ENCODE measurements at regions of chr12 and their contacts with region 1.

Region 1: DNA sequence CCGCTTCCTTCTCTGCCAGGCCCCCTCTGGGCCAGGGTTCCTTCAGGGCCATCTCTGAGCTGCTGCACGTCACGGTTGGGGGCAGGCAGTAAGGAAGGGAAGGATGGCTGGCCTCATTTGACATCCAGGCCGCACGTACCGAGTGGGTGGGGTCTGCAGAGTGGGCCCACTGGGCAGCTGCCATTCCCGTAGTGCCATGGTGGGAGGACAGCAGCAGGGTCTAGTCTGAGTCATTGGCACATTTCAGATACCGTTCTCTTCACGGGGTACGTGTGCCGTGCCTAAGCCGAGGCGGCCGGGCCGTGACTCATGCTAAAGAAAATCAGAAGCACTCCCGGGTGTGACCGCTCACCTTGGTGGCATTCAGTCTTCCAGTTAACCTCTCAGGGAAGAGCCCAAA is 43.9 kb downstream of the IL31 start:
- DNase-seq: no peak
- ATAC-seq: no peak
- H3K4me3 ChIP-seq: no peak overlapping the region
- H3K27ac ChIP-seq: peak overlapping the region in 1 of 2 experiments; percentile 50; a peak in 2 of 6 replicates
- H3K4me1 ChIP-seq: peaks cover 31% of the 10 kb centered on the region
- CTCF ChIP-seq: no peak
- EP300 ChIP-seq: no peak
- POLR2A ChIP-seq: no peak
- RAD21 ChIP-seq: no peak

Region 2: GRCh38 chr12:122116707-122117535 is 13.2 kb before region 1 on chr12:
- CTCF ChIA-PET with region 1: interaction called, 120 read pairs
- POLR2A ChIA-PET with region 1: no interaction called
- DNase-seq: peak in 1 of 2 experiments; percentile 42
- ATAC-seq: peak; percentile 41 to 60; a peak in 4 of 6 replicates
- H3K4me3 ChIP-seq: no peak overlapping the region
- H3K27ac ChIP-seq: peak overlapping the region in 1 of 2 experiments; percentile 49; a peak in 3 of 6 replicates
- H3K4me1 ChIP-seq: peaks cover 36% of the 10 kb centered on the region
- CTCF ChIP-seq: 0 out of 3 replicates have a peak, but pooled peaks have one; percentile 7
- EP300 ChIP-seq: no peak
- POLR2A ChIP-seq: no peak
- RAD21 ChIP-seq: peak; percentile 15 to 22; a peak in 2 of 5 replicates

Region 3: GRCh38 chr12:122145505-122146330 is 15.6 kb after region 1 on chr12:
- CTCF ChIA-PET with region 1: interaction called, 14 read pairs
- POLR2A ChIA-PET with region 1: no interaction called
- DNase-seq: no peak
- ATAC-seq: no peak; a peak in 1 of 6 replicates
- H3K4me3 ChIP-seq: no peak overlapping the region
- H3K27ac ChIP-seq: no peak overlapping the region
- H3K4me1 ChIP-seq: no peaks in the 10 kb centered on the region
- CTCF ChIP-seq: no peak
- EP300 ChIP-seq: no peak
- POLR2A ChIP-seq: no peak
- RAD21 ChIP-seq: no peak

Region 4: GRCh38 chr12:122159882-122160281 is 29.7 kb after region 1 on chr12:
- CTCF ChIA-PET with region 1: interaction called, 11 read pairs
- POLR2A ChIA-PET with region 1: no interaction called
- DNase-seq: no peak
- ATAC-seq: peak in 1 of 2 experiments; percentile 45; a peak in 3 of 6 replicates
- H3K4me3 ChIP-seq: no peak overlapping the region
- H3K27ac ChIP-seq: no peak overlapping the region
- H3K4me1 ChIP-seq: no peaks in the 10 kb centered on the region
- CTCF ChIP-seq: no peak
- EP300 ChIP-seq: no peak
- POLR2A ChIP-seq: no peak
- RAD21 ChIP-seq: peak in 1 of 2 experiments; percentile 11; a peak in 1 of 5 replicates

Region 5: DNA sequence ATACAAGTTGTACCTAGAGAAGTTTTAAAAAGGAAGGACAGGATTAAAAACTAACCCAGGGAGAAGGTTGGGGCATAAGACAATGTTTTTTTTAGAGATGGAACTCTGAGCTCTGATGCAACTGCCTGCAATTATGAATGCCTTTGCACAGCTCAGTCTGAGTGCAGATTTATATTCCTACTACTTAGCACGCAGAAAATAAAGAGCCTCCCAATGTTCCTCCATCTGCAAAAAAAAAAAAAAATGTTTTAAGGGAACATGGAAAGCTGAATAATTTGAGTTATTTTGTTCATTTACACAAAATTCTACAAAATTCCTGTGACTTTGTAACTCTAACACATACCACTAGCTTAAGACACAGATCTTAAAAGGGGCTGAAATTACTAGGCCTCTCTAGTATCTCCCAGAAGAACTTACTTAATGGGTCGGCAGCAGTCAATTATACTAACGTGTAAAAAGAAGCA is 276.6 kb after region 1 on chr12:
- CTCF ChIA-PET with region 1: no interaction called
- POLR2A ChIA-PET with region 1: no interaction called
- DNase-seq: peak in 1 of 2 experiments; percentile 74
- ATAC-seq: peak; percentile 63 to 92
- H3K4me3 ChIP-seq: no peak overlapping the region
- H3K27ac ChIP-seq: peak overlapping the region; percentile 92 to 98
- H3K4me1 ChIP-seq: peaks cover 53% of the 10 kb centered on the region
- CTCF ChIP-seq: no peak
- EP300 ChIP-seq: peak in 1 of 2 experiments; percentile 21; a peak in 1 of 5 replicates
- POLR2A ChIP-seq: no peak
- RAD21 ChIP-seq: no peak